ENCODE measurements at regions of chr10 and their contacts with region 1.

Region 1: DNA sequence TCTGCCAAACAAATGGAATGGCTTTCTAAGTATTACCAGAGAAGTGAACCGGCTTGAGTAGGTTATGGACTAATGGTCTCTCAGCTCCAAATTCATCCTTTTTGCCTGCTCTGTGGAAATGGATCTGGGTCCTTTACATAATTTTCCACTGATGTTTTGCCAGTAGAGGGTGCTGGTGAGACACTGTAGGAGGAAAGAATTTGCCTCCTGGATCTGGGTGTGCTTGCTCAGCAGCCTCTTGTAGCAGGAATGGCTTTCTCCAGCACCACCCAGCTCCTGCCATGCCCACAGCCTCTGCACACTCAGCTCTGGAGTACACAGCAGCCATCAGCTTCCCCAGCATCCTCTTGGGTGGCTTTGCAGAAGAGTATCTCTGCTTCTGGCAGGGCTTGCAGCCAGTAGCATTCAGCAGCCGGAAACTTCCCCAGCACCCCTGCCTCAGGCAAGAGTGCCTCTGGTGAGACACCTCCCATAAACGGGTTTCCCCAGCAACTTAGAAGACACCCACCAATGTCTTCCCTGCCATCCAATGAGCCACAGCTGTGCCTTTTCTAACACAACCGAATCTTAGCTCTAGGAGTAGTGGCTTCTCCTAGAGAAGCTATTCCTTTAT is 235.0 kb upstream of the PLPP4 start:
- DNase-seq: peak; percentile 74
- H3K4me3 ChIP-seq: no peak overlapping the region
- H3K27ac ChIP-seq: no peak overlapping the region
- H3K4me1 ChIP-seq: no peaks in the 10 kb centered on the region
- H3K27me3 ChIP-seq: peaks cover 6% of the 10 kb centered on the region
- CTCF ChIP-seq: peak; percentile 63

Region 2: GRCh38 chr10:120336911-120337540 is 115.0 kb after region 1 on chr10:
- CTCF ChIA-PET with region 1: interaction called, 6 read pairs
- POLR2A ChIA-PET with region 1: no interaction called
- intact Hi-C with region 1: loop called (anchors 1 kb)
- DNase-seq: peak; percentile 70
- H3K4me3 ChIP-seq: no peak overlapping the region
- H3K27ac ChIP-seq: no peak overlapping the region
- H3K4me1 ChIP-seq: no peaks in the 10 kb centered on the region
- H3K27me3 ChIP-seq: peaks cover 70% of the 10 kb centered on the region
- CTCF ChIP-seq: peak; percentile 83

Region 3: DNA sequence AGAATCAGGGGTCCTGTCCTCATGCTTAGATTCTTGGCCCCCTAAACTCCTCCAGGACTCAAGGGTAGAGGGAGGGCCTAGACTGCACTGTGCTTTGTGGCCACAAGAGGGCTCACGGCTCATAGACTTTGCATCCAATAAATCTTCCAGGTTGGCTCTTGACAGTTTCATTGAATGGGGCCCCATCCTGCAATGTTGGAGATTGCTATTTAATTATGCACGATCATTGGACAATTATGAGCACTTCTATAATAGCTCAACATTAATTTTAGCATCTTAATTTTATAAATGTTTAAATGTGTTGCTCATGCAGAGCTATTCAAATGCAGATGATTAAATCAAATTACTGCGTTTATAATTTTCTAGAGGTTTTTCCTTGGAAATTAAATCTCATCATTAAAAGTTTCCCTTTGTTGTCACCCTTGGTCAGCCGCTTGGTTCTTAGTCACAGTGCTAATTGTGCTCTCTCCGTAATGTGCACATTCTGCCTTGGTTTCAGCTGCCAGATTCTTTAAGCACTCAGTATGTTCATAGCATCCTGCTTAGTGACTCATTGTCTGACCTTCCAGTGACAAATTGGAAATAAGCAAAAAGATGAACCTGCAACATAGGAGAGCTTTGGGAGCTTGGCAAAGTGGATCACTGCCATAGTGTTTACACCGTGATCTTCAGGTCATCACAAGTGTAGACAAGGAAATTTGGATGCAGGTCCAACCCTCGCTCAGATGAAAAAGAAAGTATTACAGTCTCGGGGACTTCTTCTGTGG is 201.6 kb after region 1 on chr10:
- CTCF ChIA-PET with region 1: no interaction called
- POLR2A ChIA-PET with region 1: no interaction called
- intact Hi-C with region 1: loop called (anchors 10 kb)
- DNase-seq: peak; percentile 55
- H3K4me3 ChIP-seq: no peak overlapping the region
- H3K27ac ChIP-seq: no peak overlapping the region
- H3K4me1 ChIP-seq: no peaks in the 10 kb centered on the region
- H3K27me3 ChIP-seq: peaks cover 21% of the 10 kb centered on the region
- CTCF ChIP-seq: peak; percentile 93

Region 4: GRCh38 chr10:120735773-120736371 is 513.9 kb after region 1 on chr10:
- CTCF ChIA-PET with region 1: interaction called, 10 read pairs
- POLR2A ChIA-PET with region 1: no interaction called
- intact Hi-C with region 1: no loop called
- DNase-seq: peak; percentile 29
- H3K4me3 ChIP-seq: no peak overlapping the region
- H3K27ac ChIP-seq: no peak overlapping the region
- H3K4me1 ChIP-seq: no peaks in the 10 kb centered on the region
- H3K27me3 ChIP-seq: peaks cover 33% of the 10 kb centered on the region
- CTCF ChIP-seq: peak; percentile 75